Activated CD8-positive, alpha-beta T cell treated with anti-CD3 and anti-CD28 coated beads for 36 hours (primary cell): ENCODE measurements at regions of chr11 and their contacts with region 1.

Region 1: DNA sequence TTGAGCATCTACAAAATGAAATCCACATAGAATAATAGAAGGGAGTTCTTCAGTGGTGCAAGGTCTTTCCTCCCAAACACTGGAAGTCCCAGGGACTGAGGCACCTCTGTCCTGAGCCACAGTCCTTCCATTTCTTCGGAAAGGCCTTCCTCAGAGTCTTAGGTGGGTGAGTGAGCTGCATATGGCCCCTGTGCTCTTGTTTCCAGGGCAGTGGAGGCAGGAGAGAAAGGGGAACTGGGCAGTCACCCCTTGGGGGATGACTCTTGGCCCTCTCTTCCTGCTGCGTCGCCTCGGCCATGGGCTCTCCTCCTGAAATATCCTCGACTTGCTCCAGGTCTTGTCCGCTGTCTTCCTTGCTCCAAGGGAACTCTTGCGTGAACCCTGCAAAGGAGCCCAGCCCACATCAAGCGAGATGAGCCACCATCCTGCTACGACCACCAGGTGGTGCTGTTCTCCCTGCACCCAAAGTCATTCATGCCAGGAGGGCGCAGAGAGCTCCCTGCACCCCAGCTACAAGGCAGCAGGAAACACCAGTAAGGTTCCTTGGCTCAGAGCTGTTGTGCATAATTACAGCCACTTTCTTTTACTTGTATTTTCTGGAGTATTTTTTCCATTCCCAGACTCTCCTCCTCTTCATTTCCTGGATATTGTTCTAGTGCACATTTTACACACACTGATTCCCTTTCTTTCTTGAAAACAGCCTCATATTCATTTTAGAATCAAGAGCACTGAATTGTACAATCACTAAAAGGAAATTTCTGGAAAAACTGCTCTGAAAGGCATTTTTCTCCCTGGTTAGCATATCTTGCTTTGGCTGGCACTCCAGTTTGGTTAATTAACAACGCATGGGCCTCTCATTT is 397.8 kb downstream of the OPCML start:
- DNase-seq: peak; percentile 67
- ATAC-seq: peak; percentile 56
- H3K4me3 Mint-ChIP-seq: no peak overlapping the region
- H3K27ac Mint-ChIP-seq: no peak overlapping the region
- H3K4me1 Mint-ChIP-seq: no peaks in the 10 kb centered on the region
- H3K27me3 Mint-ChIP-seq: peaks cover 10% of the 10 kb centered on the region
- CTCF ChIP-seq: peak; percentile 74

Region 2: DNA sequence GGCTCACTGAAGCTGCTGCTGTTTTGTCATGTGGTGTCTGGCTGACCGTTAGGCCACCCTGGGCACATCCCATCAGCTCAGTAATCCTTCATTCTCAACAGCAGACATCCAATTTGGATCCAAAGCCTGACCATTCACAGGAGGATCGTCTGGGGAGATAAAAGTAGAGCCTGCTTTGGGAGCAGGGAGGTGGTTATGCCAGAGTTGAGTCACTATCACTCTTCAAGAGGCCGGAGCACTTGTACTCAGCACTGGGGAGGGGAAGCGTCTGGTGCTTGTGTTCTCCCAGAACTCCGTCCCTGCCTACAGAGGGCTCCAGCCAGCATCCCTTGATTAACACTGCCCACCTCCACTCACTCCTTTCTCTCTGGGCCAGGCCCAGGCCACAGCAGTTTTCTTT is 15.2 kb after region 1 on chr11:
- CTCF ChIA-PET with region 1: interaction called, 17 read pairs
- POLR2A ChIA-PET with region 1: no interaction called
- intact Hi-C with region 1: no loop called
- DNase-seq: no peak
- ATAC-seq: no peak
- H3K4me3 Mint-ChIP-seq: no peak overlapping the region
- H3K27ac Mint-ChIP-seq: no peak overlapping the region
- H3K4me1 Mint-ChIP-seq: no peaks in the 10 kb centered on the region
- H3K27me3 Mint-ChIP-seq: peaks cover 2% of the 10 kb centered on the region
- CTCF ChIP-seq: no peak

Region 3: GRCh38 chr11:133834682-133835592 is 700.4 kb after region 1 on chr11:
- CTCF ChIA-PET with region 1: interaction called, 30 read pairs
- POLR2A ChIA-PET with region 1: no interaction called
- intact Hi-C with region 1: no loop called
- DNase-seq: peak; percentile 71
- ATAC-seq: peak; percentile 81
- H3K4me3 Mint-ChIP-seq: no peak overlapping the region
- H3K27ac Mint-ChIP-seq: no peak overlapping the region
- H3K4me1 Mint-ChIP-seq: peaks cover 8% of the 10 kb centered on the region
- H3K27me3 Mint-ChIP-seq: peaks cover 9% of the 10 kb centered on the region
- CTCF ChIP-seq: peak; percentile 64